B cell (primary cell): ENCODE measurements at regions of chr1 and their contacts with region 1.

Region 1: DNA sequence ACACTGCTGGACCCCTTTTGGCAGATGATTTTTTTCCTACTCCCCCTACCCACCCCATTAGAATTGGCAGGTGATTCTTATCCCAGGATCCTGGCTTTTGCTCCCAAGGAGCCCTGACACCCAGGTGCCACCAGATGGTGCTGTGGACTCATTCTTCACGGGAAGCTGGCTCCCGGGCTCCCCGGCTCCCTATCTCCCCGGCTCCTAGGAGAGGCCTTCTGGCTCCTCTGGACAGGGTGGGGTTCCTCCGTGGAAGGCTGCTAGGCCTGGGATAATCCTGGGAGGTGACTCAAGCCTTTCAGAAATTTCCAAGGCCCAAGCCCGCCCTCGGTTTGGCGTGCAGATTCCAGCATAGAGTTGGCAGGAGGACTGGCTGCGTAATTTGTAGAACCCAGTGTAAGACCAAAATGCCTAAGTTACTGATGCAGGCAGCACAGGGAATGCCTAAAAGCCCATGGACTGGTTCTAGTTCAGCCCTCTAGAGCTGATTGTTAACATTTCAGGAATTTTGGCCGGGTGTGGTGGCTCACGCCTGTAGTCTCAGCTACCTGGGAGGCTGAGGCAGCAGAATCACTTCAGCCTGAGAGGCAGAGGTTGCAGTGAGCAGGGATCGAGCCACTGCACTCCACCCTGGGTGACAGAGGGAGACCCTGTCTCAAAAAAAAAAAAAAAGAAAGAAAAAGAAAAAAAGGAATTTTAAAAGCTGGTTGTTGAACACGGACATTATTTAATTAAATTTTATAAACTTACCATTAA is 6.8 kb upstream of the BSDC1 start:
- DNase-seq: peak; percentile 64
- ATAC-seq: peak; percentile 69
- H3K4me3 ChIP-seq: no peak overlapping the region
- H3K4me3 Mint-ChIP-seq: peak overlapping the region; percentile 13
- H3K27ac ChIP-seq: no peak overlapping the region
- H3K27ac Mint-ChIP-seq: no peak overlapping the region
- H3K4me1 ChIP-seq: peaks cover 0 to 3% of the 10 kb centered on the region in 2 donors
- H3K4me1 Mint-ChIP-seq: peaks cover 2% of the 10 kb centered on the region
- H3K27me3 ChIP-seq: no peaks in the 10 kb centered on the region
- H3K27me3 Mint-ChIP-seq: peaks cover 3% of the 10 kb centered on the region
- CTCF ChIP-seq: peak; percentile 79

Region 2: GRCh38 chr1:32413507-32414185 is 12.6 kb after region 1 on chr1:
- CTCF ChIA-PET with region 1: interaction called, 76 read pairs
- POLR2A ChIA-PET with region 1: no interaction called
- intact Hi-C with region 1: loop called (anchors 2 kb)
- DNase-seq: peak; percentile 86
- ATAC-seq: peak; percentile 57
- H3K4me3 ChIP-seq: no peak overlapping the region
- H3K4me3 Mint-ChIP-seq: no peak overlapping the region
- H3K27ac ChIP-seq: no peak overlapping the region
- H3K27ac Mint-ChIP-seq: no peak overlapping the region
- H3K4me1 ChIP-seq: no peaks in the 10 kb centered on the region
- H3K4me1 Mint-ChIP-seq: peaks cover 2% of the 10 kb centered on the region
- H3K27me3 ChIP-seq: peaks cover 0 to 6% (median 5%) of the 10 kb centered on the region in 4 experiments
- H3K27me3 Mint-ChIP-seq: peaks cover 19% of the 10 kb centered on the region
- CTCF ChIP-seq: peak; percentile 94

Region 3: DNA sequence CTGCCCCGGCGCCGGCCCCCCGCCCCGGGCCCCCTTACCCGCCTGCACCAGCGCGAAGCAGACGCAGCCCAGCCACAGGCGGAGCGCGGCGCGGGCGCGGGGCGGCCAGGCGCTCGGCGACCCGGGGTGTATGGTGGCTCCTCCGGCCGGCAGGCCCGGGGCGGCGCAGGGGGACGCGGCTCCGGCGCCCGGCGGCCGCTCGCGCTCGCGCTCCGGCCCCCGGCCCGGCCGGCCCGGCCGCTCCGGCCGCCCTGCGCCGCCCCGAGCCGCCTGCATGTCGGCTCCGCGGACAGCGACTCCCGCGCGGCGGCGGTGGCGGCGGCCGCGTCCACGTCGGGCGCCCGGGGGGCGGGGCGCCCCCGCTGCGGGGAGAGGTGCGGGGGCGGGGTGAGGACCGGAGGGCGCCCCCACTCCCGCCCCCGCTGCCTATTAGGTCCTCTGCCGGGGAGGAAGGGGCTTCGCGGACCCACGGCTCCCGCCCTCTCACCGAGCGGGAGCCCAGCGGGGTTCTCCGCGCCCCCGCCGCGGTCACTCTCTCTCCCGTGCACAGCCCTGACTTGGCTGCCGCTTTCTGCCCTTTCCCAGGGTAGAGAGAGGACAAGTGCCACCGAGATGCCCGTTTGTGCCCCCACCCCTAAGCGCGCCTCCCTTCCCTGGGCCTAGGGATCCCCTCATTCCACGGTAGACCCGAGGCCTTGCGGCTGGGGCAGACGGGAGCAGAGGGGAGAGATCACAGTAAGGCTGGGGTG is 469.7 kb after region 1 on chr1 and contains the start of gene FNDC5:
- CTCF ChIA-PET with region 1: interaction called, 6 read pairs
- POLR2A ChIA-PET with region 1: no interaction called
- intact Hi-C with region 1: loop called (anchors 2 kb)
- DNase-seq: peak; percentile 37
- ATAC-seq: peak; percentile 14
- H3K4me3 ChIP-seq: peak within 1 kb of the TSS in 4 of 5 experiments; percentile 11 to 44 (median 25)
- H3K4me3 Mint-ChIP-seq: peak within 1 kb of the TSS; percentile 83
- H3K27ac ChIP-seq: no peak within 1 kb of the TSS
- H3K27ac Mint-ChIP-seq: no peak within 1 kb of the TSS
- H3K4me1 ChIP-seq: peaks cover 25 to 29% of the 10 kb centered on the region in 2 donors
- H3K4me1 Mint-ChIP-seq: peaks cover 37% of the 10 kb centered on the region
- H3K27me3 ChIP-seq: peaks cover 0 to 53% (median 19%) of the 10 kb centered on the region in 4 experiments
- H3K27me3 Mint-ChIP-seq: peaks cover 37% of the 10 kb centered on the region
- CTCF ChIP-seq: no peak
- total RNA-seq, gene FNDC5: 0.75 and 0.76 TPM in 2 replicates